K562 (cell line): ENCODE measurements at regions of chr13 and their contacts with region 1.

Region 1: GRCh38 chr13:106619688-106620555 is 52.0 kb upstream of the ARGLU1 start:
- DNase-seq: peak; percentile 36 to 49 (median 41)
- ATAC-seq: peak; percentile 93
- H3K4me3 ChIP-seq: no peak overlapping the region
- H3K27ac ChIP-seq: no peak overlapping the region
- H3K4me1 ChIP-seq: no peaks in the 10 kb centered on the region
- H3K27me3 ChIP-seq: no peaks in the 10 kb centered on the region
- CTCF ChIP-seq: peak; percentile 48 to 64 (median 57)
- EP300 ChIP-seq: no peak
- POLR2A ChIP-seq: no peak
- RAD21 ChIP-seq: peak; percentile 38 to 47

Region 2: GRCh38 chr13:106536244-106537034 is 83.5 kb before region 1 on chr13:
- CTCF ChIA-PET with region 1: no interaction called
- POLR2A ChIA-PET with region 1: no interaction called
- in situ Hi-C with region 1: no loop called
- intact Hi-C with region 1: loop called (anchors 2 kb)
- DNase-seq: peak; percentile 59 to 86 (median 62)
- ATAC-seq: peak; percentile 78
- H3K4me3 ChIP-seq: peak overlapping the region; percentile 47
- H3K27ac ChIP-seq: no peak overlapping the region
- H3K4me1 ChIP-seq: peaks cover 0 to 19% of the 10 kb centered on the region in 2 experiments; a peak in 2 of 5 replicates
- H3K27me3 ChIP-seq: no peaks in the 10 kb centered on the region; a peak in 1 of 5 replicates
- CTCF ChIP-seq: peak; percentile 75 to 82 (median 76)
- EP300 ChIP-seq: no peak
- POLR2A ChIP-seq: no peak
- RAD21 ChIP-seq: peak; percentile 56 to 73

Region 3: GRCh38 chr13:106649495-106649894 is 29.6 kb after region 1 on chr13:
- CTCF ChIA-PET with region 1: no interaction called
- POLR2A ChIA-PET with region 1: no interaction called
- in situ Hi-C with region 1: no loop called
- intact Hi-C with region 1: no loop called
- DNase-seq: no peak
- ATAC-seq: no peak
- H3K4me3 ChIP-seq: no peak overlapping the region
- H3K27ac ChIP-seq: no peak overlapping the region
- H3K4me1 ChIP-seq: no peaks in the 10 kb centered on the region
- H3K27me3 ChIP-seq: no peaks in the 10 kb centered on the region
- CTCF ChIP-seq: no peak
- EP300 ChIP-seq: no peak
- POLR2A ChIP-seq: no peak
- RAD21 ChIP-seq: no peak